Caco-2 (cell line): ENCODE measurements at regions of chr4 and their contacts with region 1.

Region 1: GRCh38 chr4:94766856-94767255 is 9.1 kb downstream of the BMPR1B start:
- DNase-seq: no peak
- H3K4me3 ChIP-seq: no peak overlapping the region
- H3K4me3 Mint-ChIP-seq: no peak overlapping the region
- H3K27ac Mint-ChIP-seq: no peak overlapping the region
- H3K4me1 ChIP-seq: no peaks in the 10 kb centered on the region
- H3K4me1 Mint-ChIP-seq: peaks cover 5% of the 10 kb centered on the region
- H3K27me3 ChIP-seq: no peaks in the 10 kb centered on the region
- H3K27me3 Mint-ChIP-seq: no peaks in the 10 kb centered on the region
- CTCF ChIP-seq: no peak

Region 2: DNA sequence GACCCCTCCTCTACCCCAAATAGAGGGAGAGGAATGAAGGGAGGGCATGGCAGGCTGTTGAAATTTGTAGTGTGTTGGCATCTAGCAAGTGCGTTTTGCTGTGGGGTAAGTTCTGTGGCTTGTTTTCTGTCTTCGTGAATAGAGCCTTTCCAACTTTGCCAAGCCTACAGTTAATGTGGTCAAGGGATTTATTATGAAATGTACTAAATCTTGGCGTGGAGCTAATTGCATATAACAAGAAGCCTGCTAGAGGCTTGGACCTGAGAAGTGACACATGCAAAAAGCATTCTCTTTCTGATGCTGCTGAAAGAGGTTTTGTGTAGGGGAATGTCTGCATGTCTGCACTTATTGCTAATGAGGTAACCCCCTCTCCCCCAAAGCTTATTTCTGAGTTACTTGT is 123.1 kb after region 1 on chr4:
- CTCF ChIA-PET with region 1: no interaction called
- POLR2A ChIA-PET with region 1: no interaction called
- intact Hi-C with region 1: loop called (anchors 10 kb)
- DNase-seq: no peak
- H3K4me3 ChIP-seq: no peak overlapping the region
- H3K4me3 Mint-ChIP-seq: no peak overlapping the region
- H3K27ac Mint-ChIP-seq: no peak overlapping the region
- H3K4me1 ChIP-seq: no peaks in the 10 kb centered on the region
- H3K4me1 Mint-ChIP-seq: no peaks in the 10 kb centered on the region
- H3K27me3 ChIP-seq: no peaks in the 10 kb centered on the region
- H3K27me3 Mint-ChIP-seq: no peaks in the 10 kb centered on the region
- CTCF ChIP-seq: no peak

Region 3: GRCh38 chr4:95213366-95213765 is 446.5 kb after region 1 on chr4:
- CTCF ChIA-PET with region 1: no interaction called
- POLR2A ChIA-PET with region 1: no interaction called
- intact Hi-C with region 1: no loop called
- DNase-seq: no peak
- H3K4me3 ChIP-seq: no peak overlapping the region
- H3K4me3 Mint-ChIP-seq: no peak overlapping the region
- H3K27ac Mint-ChIP-seq: no peak overlapping the region
- H3K4me1 ChIP-seq: 0 out of 2 replicates have a peak, but pooled peaks cover 7% of the 10 kb centered on the region
- H3K4me1 Mint-ChIP-seq: no peaks in the 10 kb centered on the region
- H3K27me3 ChIP-seq: no peaks in the 10 kb centered on the region
- H3K27me3 Mint-ChIP-seq: peaks cover 3% of the 10 kb centered on the region
- CTCF ChIP-seq: no peak